ENCODE measurements at regions of chr9 and their contacts with region 1.

Region 1: GRCh38 chr9:76818271-76818670 is 54.0 kb downstream of the PCA3 start:
- DNase-seq: peak; percentile 69
- H3K4me3 ChIP-seq: no peak overlapping the region
- H3K27ac ChIP-seq: peak overlapping the region; percentile 70 to 84 (median 73)
- H3K4me1 ChIP-seq: peaks cover 0 to 17% (median 3%) of the 10 kb centered on the region in 4 donors
- H3K27me3 ChIP-seq: no peaks in the 10 kb centered on the region
- CTCF ChIP-seq: no peak
- EP300 ChIP-seq: peak; percentile 32
- POLR2A ChIP-seq: no peak

Region 2: GRCh38 chr9:76904661-76905457 is 86.6 kb after region 1 on chr9:
- in situ Hi-C with region 1: no loop called
- intact Hi-C with region 1: loop called (anchors 5 kb)
- DNase-seq: peak; percentile 67
- H3K4me3 ChIP-seq: peak overlapping the region; percentile 39 to 60 (median 54)
- H3K27ac ChIP-seq: peak overlapping the region; percentile 63 to 91 (median 84)
- H3K4me1 ChIP-seq: peaks cover 4 to 29% (median 21%) of the 10 kb centered on the region in 4 donors
- H3K27me3 ChIP-seq: peaks cover 51% of the 10 kb centered on the region
- CTCF ChIP-seq: no peak
- EP300 ChIP-seq: no peak
- POLR2A ChIP-seq: no peak

Measured in transverse colon (tissue), 4 donors.